Psoas muscle (tissue), 8 donors: ENCODE measurements at regions of chr14 and their contacts with region 1.

Region 1: DNA sequence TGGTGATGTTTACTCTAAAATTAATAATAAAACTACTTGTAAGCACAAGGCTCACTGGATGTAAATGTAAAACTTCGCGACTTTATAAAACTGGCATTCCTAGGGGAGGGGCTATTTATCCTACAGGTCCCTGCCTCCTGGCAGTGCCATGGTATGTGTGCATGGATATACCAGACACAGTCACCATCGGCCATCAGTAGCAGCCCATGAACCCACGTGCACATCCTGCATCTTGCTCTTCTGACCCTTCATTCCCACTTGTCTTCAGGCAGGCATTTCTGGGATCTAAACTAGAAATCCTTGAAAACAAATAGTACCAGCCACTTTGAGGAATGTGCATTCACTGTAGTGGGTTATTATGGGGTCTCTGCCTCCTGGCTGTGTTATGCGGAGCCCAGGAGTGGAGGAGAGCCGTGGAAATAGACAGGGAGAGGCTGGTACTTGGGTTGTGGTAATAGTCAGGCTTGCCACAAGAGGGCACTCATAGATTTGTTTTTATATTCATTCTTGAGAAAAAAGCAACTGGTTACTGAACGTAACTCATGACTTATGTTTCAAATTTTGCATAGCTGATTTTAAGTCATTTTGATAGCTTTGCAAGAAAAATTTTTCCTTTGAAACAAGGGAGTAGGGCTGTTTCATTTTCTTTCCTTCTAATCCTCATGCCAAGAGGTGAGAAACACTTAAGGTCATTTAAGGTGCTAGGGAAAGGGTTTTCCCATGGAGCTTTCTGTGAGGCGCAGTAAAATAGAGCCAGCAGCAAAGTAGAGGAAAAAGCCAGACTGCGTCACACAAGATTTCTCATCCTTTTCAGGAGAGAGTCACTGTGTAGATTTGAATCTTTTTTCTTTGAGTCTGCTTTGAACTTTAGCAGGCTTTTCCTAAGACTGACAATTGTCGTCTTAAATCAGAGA is 17.4 kb upstream of the GALNT16 start:
- DNase-seq: no peak
- ATAC-seq: peak; percentile 64 to 86 (median 78)
- H3K4me3 ChIP-seq: no peak overlapping the region
- H3K27ac ChIP-seq: no peak overlapping the region
- H3K4me1 ChIP-seq: peaks cover 3% of the 10 kb centered on the region
- H3K27me3 ChIP-seq: no peaks in the 10 kb centered on the region
- CTCF ChIP-seq: peak; percentile 83

Region 2: DNA sequence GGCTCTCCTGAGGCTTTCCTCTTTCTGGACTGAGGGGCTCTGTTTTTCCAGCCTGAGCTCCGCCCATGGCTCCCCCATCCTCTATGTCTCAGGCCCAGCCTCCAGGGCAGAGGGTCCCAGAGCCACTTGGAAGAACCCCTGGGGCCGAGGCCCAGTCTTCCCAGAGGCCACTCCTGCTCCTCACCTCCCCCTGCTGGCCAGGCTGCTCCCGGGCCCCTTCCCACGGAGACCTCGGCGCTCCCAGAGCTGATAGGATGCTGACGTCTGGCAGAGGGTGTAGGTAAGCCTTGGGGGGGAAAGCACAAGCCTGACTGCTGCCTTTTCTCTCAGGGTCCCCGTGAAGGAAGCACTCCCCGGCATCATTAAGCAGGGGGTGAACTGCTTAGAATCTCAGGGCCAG is 104.1 kb after region 1 on chr14:
- intact Hi-C with region 1: loop called in 1 of 2 experiments (anchors 2 kb)
- DNase-seq: peak in 1 of 2 donors; percentile 34
- ATAC-seq: peak in 2 of 4 donors; percentile 47 to 57
- H3K4me3 ChIP-seq: no peak overlapping the region
- H3K27ac ChIP-seq: no peak overlapping the region
- H3K4me1 ChIP-seq: no peaks in the 10 kb centered on the region
- H3K27me3 ChIP-seq: peaks cover 0 to 1% (median 0%) of the 10 kb centered on the region in 3 donors
- CTCF ChIP-seq: peak; percentile 43

Region 3: GRCh38 chr14:69363055-69363454 is 120.5 kb after region 1 on chr14:
- intact Hi-C with region 1: loop called in 1 of 2 experiments (anchors 5 kb)
- DNase-seq: peak; percentile 27 to 66
- ATAC-seq: peak in 3 of 4 donors; percentile 42 to 67 (median 53)
- H3K4me3 ChIP-seq: no peak overlapping the region
- H3K27ac ChIP-seq: no peak overlapping the region
- H3K4me1 ChIP-seq: no peaks in the 10 kb centered on the region
- H3K27me3 ChIP-seq: no peaks in the 10 kb centered on the region
- CTCF ChIP-seq: peak; percentile 37

Region 4: DNA sequence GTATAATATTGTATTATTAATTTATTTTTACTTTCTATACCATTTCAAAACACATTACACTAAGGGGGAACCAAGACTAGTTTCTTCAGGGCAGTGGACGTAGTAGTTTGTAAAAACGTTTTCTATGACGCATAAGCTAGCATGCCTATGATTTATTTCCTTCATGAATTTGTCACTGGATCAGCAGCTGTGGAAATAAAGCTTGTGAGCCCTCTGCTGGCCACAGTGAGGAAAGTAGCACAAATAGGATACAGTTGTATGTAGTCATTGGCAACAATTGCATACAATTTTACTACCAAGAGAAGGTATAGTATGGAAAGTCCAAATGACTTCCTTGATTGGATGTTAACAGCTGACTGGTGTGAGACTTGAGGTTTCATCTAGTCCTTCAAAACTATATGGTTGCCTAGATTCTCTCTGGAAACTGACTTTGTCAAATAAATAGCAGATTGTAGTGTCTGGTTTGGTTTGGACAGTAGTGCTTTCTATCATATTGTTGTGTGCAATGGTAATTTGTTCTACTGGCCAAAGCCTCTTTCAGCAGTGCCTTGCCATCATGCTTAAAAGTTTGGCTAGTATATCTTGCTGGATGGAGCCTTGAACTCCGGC is 217.6 kb after region 1 on chr14:
- intact Hi-C with region 1: loop called (anchors 1 to 2 kb)
- DNase-seq: peak; percentile 63 to 67
- ATAC-seq: peak; percentile 91 to 98 (median 93)
- H3K4me3 ChIP-seq: no peak overlapping the region
- H3K27ac ChIP-seq: no peak overlapping the region
- H3K4me1 ChIP-seq: no peaks in the 10 kb centered on the region
- H3K27me3 ChIP-seq: no peaks in the 10 kb centered on the region
- CTCF ChIP-seq: peak; percentile 82

Region 5: GRCh38 chr14:69574263-69574953 is 331.8 kb after region 1 on chr14 and contains the start of gene CCDC177:
- intact Hi-C with region 1: loop called in 1 of 2 experiments (anchors 5 kb)
- DNase-seq: peak; percentile 53 to 70
- ATAC-seq: peak; percentile 47 to 79 (median 66)
- H3K4me3 ChIP-seq: peak within 1 kb of the TSS; percentile 66
- H3K27ac ChIP-seq: no peak within 1 kb of the TSS
- H3K4me1 ChIP-seq: peaks cover 29% of the 10 kb centered on the region
- H3K27me3 ChIP-seq: peaks cover 0 to 77% (median 26%) of the 10 kb centered on the region in 3 donors
- CTCF ChIP-seq: peak; percentile 84
- total RNA-seq, gene CCDC177: not detected